ENCODE measurements at regions of chr17 and their contacts with region 1.

Region 1: GRCh38 chr17:39980351-39981206 is at the start of gene PSMD3:
- DNase-seq: peak; percentile 99
- H3K4me3 ChIP-seq: peak within 1 kb of the TSS; percentile 75
- H3K27me3 ChIP-seq: no peaks in the 10 kb centered on the region
- CTCF ChIP-seq: peak; percentile 80
- polyA plus RNA-seq, gene PSMD3: 57.0 and 104 TPM in 2 replicates

Region 2: GRCh38 chr17:39872751-39873150 is 107.8 kb before region 1 on chr17:
- CTCF ChIA-PET with region 1: interaction called, 45 read pairs
- POLR2A ChIA-PET with region 1: no interaction called
- DNase-seq: no peak
- H3K4me3 ChIP-seq: no peak overlapping the region
- H3K27me3 ChIP-seq: peaks cover 9% of the 10 kb centered on the region
- CTCF ChIP-seq: peak; percentile 42

Region 3: GRCh38 chr17:39939588-39940419 is 40.8 kb before region 1 on chr17:
- CTCF ChIA-PET with region 1: interaction called, 32 read pairs
- POLR2A ChIA-PET with region 1: no interaction called
- DNase-seq: peak; percentile 76
- H3K4me3 ChIP-seq: no peak overlapping the region
- H3K27me3 ChIP-seq: no peaks in the 10 kb centered on the region; the same call in 1 of the 2 replicates
- CTCF ChIP-seq: peak; percentile 72

Region 4: DNA sequence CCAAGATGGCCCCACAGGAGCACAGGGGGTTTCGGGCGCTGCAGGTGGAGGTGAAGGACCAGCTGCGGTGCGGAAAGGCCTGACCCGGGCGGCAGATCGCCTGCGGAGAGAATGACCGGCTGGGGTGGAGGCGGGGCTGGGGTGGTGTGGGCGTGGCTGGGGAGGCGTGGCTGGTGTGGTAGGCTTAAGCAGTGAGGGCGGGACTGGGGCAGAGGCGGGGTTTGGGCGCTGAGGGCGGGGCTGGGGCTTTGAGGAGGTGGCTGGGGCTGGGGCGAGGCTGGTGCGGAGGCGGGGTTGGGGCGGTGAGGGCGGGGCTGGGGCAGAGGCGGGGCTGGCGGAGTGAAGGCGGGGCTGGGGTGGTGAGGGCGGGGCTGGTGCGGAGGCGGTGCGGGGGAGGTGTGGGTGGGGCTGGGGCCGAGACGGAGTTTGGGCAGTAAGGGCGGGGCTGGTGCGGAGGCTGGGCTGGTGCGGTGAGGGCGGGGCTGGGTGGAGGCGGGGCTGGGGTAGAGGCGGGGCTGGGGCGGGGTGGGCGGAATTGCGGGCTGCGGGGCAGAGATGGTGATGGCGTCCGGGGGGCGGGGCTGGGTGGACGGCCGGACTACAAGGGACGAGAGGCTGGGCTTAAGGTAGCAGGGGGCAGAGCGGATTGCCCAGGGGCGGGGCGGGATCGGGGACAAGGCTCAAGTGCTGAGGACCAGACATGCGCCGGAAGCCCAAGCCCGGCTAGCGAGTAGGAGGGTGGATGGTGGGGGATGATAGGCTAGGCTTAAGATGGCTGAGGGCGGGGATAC is 27.7 kb before region 1 on chr17:
- CTCF ChIA-PET with region 1: interaction called, 51 read pairs
- POLR2A ChIA-PET with region 1: no interaction called
- DNase-seq: peak; percentile 72
- H3K4me3 ChIP-seq: peak overlapping the region; percentile 40
- H3K27me3 ChIP-seq: no peaks in the 10 kb centered on the region
- CTCF ChIP-seq: no peak

Region 5: GRCh38 chr17:39963829-39964228 is 16.8 kb before region 1 on chr17:
- CTCF ChIA-PET with region 1: interaction called, 51 read pairs
- POLR2A ChIA-PET with region 1: no interaction called
- DNase-seq: no peak
- H3K4me3 ChIP-seq: no peak overlapping the region
- H3K27me3 ChIP-seq: peaks cover 4% of the 10 kb centered on the region
- CTCF ChIP-seq: no peak

Measured in BJ (cell line).